GM12878 (cell line): ENCODE measurements at regions of chr2 and their contacts with region 1.

Region 1: DNA sequence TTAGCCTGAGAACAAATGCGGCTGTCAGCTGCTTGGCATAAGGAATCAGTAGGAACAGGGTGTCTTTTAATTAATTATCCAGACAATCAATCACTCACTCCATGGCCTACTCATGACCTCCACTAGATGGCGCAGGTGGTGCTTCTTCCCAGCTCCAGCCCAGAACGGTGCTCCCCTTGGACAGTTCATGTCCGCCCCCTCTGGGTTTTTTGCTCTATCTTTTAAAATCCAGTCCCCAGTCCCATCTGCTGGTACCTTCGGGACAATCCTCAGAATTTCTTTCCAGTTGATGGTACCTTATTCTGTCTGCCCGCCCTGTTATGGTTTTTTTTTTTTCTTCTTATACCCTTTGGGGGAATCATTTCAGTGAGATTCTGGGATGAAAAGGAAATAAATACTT is 99.8 kb downstream of the CACNB4 start:
- DNase-seq: no peak
- ATAC-seq: peak; percentile 96
- H3K4me3 ChIP-seq: no peak overlapping the region
- H3K27ac ChIP-seq: no peak overlapping the region
- H3K4me1 ChIP-seq: peaks cover 3% of the 10 kb centered on the region
- H3K27me3 ChIP-seq: no peaks in the 10 kb centered on the region; a peak in 1 of 4 replicates
- CTCF ChIP-seq: peak; percentile 72 to 90 (median 85)
- EP300 ChIP-seq: no peak
- POLR2A ChIP-seq: no peak
- RAD21 ChIP-seq: peak; percentile 58

Region 2: GRCh38 chr2:151987484-151987883 is 11.6 kb before region 1 on chr2:
- CTCF ChIA-PET with region 1: interaction called, 10 read pairs
- POLR2A ChIA-PET with region 1: no interaction called
- RAD21 ChIA-PET with region 1: no interaction called
- SMC1A ChIA-PET with region 1: no interaction called
- in situ Hi-C with region 1: no loop called
- intact Hi-C with region 1: no loop called
- DNase-seq: no peak
- ATAC-seq: no peak
- H3K4me3 ChIP-seq: no peak overlapping the region
- H3K27ac ChIP-seq: no peak overlapping the region
- H3K4me1 ChIP-seq: no peaks in the 10 kb centered on the region
- H3K27me3 ChIP-seq: no peaks in the 10 kb centered on the region; a peak in 2 of 4 replicates
- CTCF ChIP-seq: no peak
- EP300 ChIP-seq: no peak
- POLR2A ChIP-seq: no peak
- RAD21 ChIP-seq: no peak

Region 3: GRCh38 chr2:152012697-152013096 is 13.6 kb after region 1 on chr2:
- CTCF ChIA-PET with region 1: interaction called, 12 read pairs
- POLR2A ChIA-PET with region 1: interaction called, 3 read pairs
- RAD21 ChIA-PET with region 1: no interaction called
- SMC1A ChIA-PET with region 1: no interaction called
- in situ Hi-C with region 1: no loop called
- intact Hi-C with region 1: no loop called
- DNase-seq: no peak
- ATAC-seq: no peak
- H3K4me3 ChIP-seq: no peak overlapping the region
- H3K27ac ChIP-seq: no peak overlapping the region
- H3K4me1 ChIP-seq: no peaks in the 10 kb centered on the region
- H3K27me3 ChIP-seq: peaks cover 0 to 4% of the 10 kb centered on the region in 2 experiments; a peak in 1 of 4 replicates
- CTCF ChIP-seq: no peak
- EP300 ChIP-seq: no peak
- POLR2A ChIP-seq: no peak
- RAD21 ChIP-seq: no peak

Region 4: GRCh38 chr2:152354909-152355308 is 355.9 kb after region 1 on chr2:
- CTCF ChIA-PET with region 1: no interaction called
- POLR2A ChIA-PET with region 1: no interaction called
- RAD21 ChIA-PET with region 1: no interaction called
- SMC1A ChIA-PET with region 1: no interaction called
- in situ Hi-C with region 1: no loop called
- intact Hi-C with region 1: no loop called
- DNase-seq: no peak
- ATAC-seq: no peak
- H3K4me3 ChIP-seq: no peak overlapping the region
- H3K27ac ChIP-seq: no peak overlapping the region
- H3K4me1 ChIP-seq: no peaks in the 10 kb centered on the region
- H3K27me3 ChIP-seq: no peaks in the 10 kb centered on the region
- CTCF ChIP-seq: no peak
- EP300 ChIP-seq: no peak
- POLR2A ChIP-seq: no peak
- RAD21 ChIP-seq: no peak